Activated T-helper 2 cell treated with anti-CD3 and anti-CD28 coated beads, Interferon-gamma antibody, Interleukin-2, Interleukin-4, amounts not matched to agents 10 μg/mL and 5 μg/mL and 100 μg/mL, durations not matched to agents 14 hours and 24 hours and 36 hours (primary cell): ENCODE measurements at regions of chr5 and their contacts with region 1.

Region 1: GRCh38 chr5:168851902-168852321 is 272.7 kb upstream of the PANK3 start:
- DNase-seq: peak; percentile 65
- H3K4me3 Mint-ChIP-seq: peak overlapping the region; percentile 68
- H3K27ac Mint-ChIP-seq: peak overlapping the region; percentile 93
- H3K4me1 Mint-ChIP-seq: peaks cover 54% of the 10 kb centered on the region
- H3K27me3 Mint-ChIP-seq: no peaks in the 10 kb centered on the region

Region 2: GRCh38 chr5:168747987-168748777 is 103.7 kb before region 1 on chr5:
- intact Hi-C with region 1: loop called (anchors 1 kb)
- DNase-seq: peak; percentile 51
- H3K4me3 Mint-ChIP-seq: no peak overlapping the region
- H3K27ac Mint-ChIP-seq: peak overlapping the region; percentile 76
- H3K4me1 Mint-ChIP-seq: peaks cover 13% of the 10 kb centered on the region
- H3K27me3 Mint-ChIP-seq: no peaks in the 10 kb centered on the region

Region 3: GRCh38 chr5:168802337-168802736 is 49.6 kb before region 1 on chr5:
- intact Hi-C with region 1: loop called (anchors 1 kb)
- DNase-seq: peak; percentile 30
- H3K4me3 Mint-ChIP-seq: peak overlapping the region; percentile 71
- H3K27ac Mint-ChIP-seq: peak overlapping the region; percentile 94
- H3K4me1 Mint-ChIP-seq: peaks cover 48% of the 10 kb centered on the region
- H3K27me3 Mint-ChIP-seq: no peaks in the 10 kb centered on the region

Region 4: DNA sequence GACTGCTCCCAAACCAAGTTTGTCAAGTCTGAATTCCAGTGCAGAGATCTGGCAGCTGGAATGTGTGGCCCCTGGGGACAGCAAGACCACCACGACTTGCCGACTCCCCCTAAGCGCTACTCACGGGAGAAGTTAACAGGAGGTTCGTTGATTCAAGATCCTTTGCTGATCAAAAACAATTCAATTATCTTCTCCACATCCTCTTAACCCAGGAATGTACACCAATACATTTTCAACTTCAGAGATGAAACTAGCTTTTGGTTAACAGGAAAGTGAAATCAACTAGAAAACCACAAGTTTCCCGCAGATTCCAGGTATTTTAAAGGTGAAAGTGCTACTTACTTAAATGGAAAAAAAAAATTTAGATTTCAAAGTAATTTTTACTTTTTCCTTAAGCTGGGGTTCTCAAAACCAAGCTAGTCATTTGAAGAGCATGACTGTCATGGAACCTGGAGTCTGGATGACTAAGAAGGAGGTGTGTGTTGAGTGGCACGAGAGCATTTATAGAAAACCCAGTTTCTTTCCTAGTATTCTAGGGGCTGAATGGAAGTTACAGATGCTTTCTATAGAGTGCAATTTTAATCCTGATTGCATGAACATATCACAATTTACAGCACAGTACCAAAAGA is 15.2 kb before region 1 on chr5:
- intact Hi-C with region 1: loop called (anchors 1 kb)
- DNase-seq: no peak
- H3K4me3 Mint-ChIP-seq: peak overlapping the region; percentile 81
- H3K27ac Mint-ChIP-seq: peak overlapping the region; percentile 94
- H3K4me1 Mint-ChIP-seq: peaks cover 53% of the 10 kb centered on the region
- H3K27me3 Mint-ChIP-seq: no peaks in the 10 kb centered on the region